Endothelial cell of umbilical vein (primary cell): ENCODE measurements at regions of chr11 and their contacts with region 1.

Region 1: DNA sequence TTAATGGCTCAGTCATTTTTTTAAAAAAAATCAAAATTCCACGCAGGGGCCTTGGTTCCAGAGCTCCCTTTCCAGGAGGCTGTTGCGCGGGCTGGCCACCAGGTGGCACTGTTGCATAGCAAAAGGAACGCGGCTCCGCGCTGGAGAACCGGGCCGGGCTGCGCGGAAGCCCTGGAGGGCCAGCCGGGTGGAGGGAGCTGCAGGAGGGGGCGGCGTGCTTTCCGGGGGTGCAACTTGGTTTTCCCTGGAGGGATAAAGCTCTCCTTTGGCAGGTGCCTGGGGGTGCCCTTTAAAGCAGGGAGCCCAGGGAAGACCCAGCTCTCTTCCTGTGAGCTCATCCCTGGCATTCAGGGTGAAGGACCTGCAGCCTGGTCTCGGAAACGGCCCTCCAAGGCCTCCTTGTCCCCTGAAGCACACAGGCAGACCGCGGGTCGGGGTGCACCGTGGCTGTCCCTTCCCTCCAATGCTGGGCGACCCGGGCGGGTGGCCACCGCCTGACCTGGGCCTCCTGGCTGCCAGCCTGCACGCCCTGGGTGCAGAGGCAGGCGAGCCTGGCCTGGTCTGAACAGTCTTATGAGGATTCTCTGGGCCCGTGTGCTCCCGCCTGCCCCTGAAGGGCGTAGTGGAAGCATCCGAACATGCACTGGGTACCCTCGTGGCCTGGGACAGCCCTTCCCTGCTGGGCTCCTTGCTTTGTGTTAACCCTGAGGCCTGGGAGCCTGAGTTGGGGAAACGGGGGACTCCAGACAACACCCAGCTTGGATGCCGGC is 23.4 kb downstream of the KRTAP5-5 start:
- DNase-seq: peak; percentile 44
- H3K4me3 ChIP-seq: no peak overlapping the region
- H3K27ac ChIP-seq: no peak overlapping the region
- H3K4me1 ChIP-seq: peaks cover 2% of the 10 kb centered on the region
- H3K27me3 ChIP-seq: peaks cover 0 to 4% of the 10 kb centered on the region in 2 experiments
- CTCF ChIP-seq: peak; percentile 93
- POLR2A ChIP-seq: no peak

Region 2: DNA sequence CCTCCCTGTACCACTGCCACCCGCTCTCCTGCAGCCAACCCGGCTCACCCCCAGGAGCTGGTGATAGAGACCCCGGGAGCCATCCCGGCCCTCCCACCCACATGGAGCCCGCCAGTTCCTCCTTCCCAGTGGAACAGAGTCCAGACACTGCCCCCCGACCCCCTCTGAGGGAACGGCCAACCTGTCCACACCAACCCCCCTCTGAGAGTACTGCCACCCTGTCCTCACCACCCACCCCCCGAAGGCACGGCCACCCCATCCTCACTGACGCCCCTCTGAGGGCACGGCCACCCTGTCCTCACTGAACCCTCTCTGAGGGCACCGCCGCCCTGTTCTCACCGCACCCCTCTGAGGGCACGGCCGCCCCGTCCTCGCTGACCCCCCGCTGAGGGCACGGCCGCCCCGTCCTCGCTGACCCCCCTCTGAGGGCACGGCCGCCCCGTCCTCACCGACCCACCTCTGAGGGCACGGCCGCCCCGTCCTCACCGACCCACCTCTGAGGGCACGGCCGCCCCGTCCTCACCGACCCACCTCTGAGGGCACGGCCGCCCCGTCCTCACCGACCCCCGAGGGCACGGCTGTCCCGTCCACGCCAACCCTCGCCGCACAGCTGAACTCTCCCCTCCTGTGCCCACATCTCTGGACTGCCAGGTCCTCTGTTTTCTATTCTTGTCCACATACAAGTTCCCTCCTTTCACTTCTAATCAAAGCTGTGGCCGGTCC is 361.5 kb before region 1 on chr11:
- CTCF ChIA-PET with region 1: no interaction called
- POLR2A ChIA-PET with region 1: no interaction called
- dilution Hi-C with region 1: no loop called
- intact Hi-C with region 1: no loop called
- DNase-seq: no peak
- H3K4me3 ChIP-seq: no peak overlapping the region
- H3K27ac ChIP-seq: no peak overlapping the region
- H3K4me1 ChIP-seq: no peaks in the 10 kb centered on the region
- H3K27me3 ChIP-seq: no peaks in the 10 kb centered on the region
- CTCF ChIP-seq: no peak
- POLR2A ChIP-seq: no peak

Region 3: GRCh38 chr11:1458340-1459218 is 194.4 kb before region 1 on chr11:
- CTCF ChIA-PET with region 1: no interaction called
- POLR2A ChIA-PET with region 1: no interaction called
- dilution Hi-C with region 1: no loop called
- intact Hi-C with region 1: no loop called
- DNase-seq: no peak
- H3K4me3 ChIP-seq: no peak overlapping the region
- H3K27ac ChIP-seq: no peak overlapping the region
- H3K4me1 ChIP-seq: no peaks in the 10 kb centered on the region
- H3K27me3 ChIP-seq: no peaks in the 10 kb centered on the region
- CTCF ChIP-seq: peak; percentile 5 to 53
- POLR2A ChIP-seq: no peak

Region 4: GRCh38 chr11:1546536-1547400 is 106.2 kb before region 1 on chr11:
- CTCF ChIA-PET with region 1: interaction called, 13 read pairs
- POLR2A ChIA-PET with region 1: no interaction called
- dilution Hi-C with region 1: no loop called
- intact Hi-C with region 1: no loop called
- DNase-seq: peak; percentile 28
- H3K4me3 ChIP-seq: no peak overlapping the region
- H3K27ac ChIP-seq: no peak overlapping the region
- H3K4me1 ChIP-seq: peaks cover 2% of the 10 kb centered on the region
- H3K27me3 ChIP-seq: peaks cover 13 to 28% of the 10 kb centered on the region in 2 experiments
- CTCF ChIP-seq: peak; percentile 62 to 70
- POLR2A ChIP-seq: no peak

Region 5: GRCh38 chr11:1633864-1634263 is 19.1 kb before region 1 on chr11:
- CTCF ChIA-PET with region 1: interaction called, 74 read pairs
- POLR2A ChIA-PET with region 1: no interaction called
- dilution Hi-C with region 1: no loop called
- intact Hi-C with region 1: no loop called
- DNase-seq: no peak
- H3K4me3 ChIP-seq: no peak overlapping the region
- H3K27ac ChIP-seq: no peak overlapping the region
- H3K4me1 ChIP-seq: peaks cover 3% of the 10 kb centered on the region
- H3K27me3 ChIP-seq: peaks cover 3 to 7% of the 10 kb centered on the region in 2 experiments
- CTCF ChIP-seq: no peak
- POLR2A ChIP-seq: no peak

Region 6: DNA sequence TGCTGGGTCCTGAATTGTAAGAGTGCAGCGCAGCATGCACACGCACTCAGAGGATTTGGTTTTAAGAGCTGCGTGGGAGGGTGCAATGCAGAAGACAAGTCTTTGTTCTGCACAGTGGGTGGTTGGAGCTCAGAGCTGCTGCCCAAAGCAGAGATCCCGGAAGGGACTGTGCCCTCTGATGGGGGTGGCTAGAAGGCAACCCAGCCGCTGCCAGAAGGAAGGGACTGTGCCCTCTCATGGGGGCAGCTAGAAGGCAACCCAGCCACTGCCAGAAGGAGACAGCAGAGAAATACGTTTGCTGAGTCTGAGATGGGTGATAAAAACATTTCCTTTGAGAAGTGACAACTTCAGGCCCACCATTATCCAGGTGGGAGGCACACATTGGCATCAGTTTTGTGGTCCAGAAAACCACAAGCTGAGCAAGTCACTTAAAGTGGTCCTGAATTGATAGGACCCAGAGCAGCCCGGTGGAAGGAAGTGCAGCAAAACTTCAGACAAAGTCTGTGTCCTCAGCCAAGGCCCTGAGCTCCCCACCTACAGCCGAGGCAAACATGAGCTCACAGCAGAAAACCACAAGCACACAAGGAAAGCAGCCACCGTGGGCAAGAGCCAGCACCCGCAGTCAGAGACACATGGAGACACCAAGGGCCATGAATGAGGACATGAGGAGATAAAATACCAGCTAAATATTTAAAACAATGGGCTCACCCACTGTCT is 48.3 kb after region 1 on chr11:
- CTCF ChIA-PET with region 1: interaction called, 21 read pairs
- POLR2A ChIA-PET with region 1: no interaction called
- dilution Hi-C with region 1: no loop called
- intact Hi-C with region 1: no loop called
- DNase-seq: no peak
- H3K4me3 ChIP-seq: no peak overlapping the region
- H3K27ac ChIP-seq: no peak overlapping the region
- H3K4me1 ChIP-seq: peaks cover 8% of the 10 kb centered on the region
- H3K27me3 ChIP-seq: no peaks in the 10 kb centered on the region
- CTCF ChIP-seq: no peak
- POLR2A ChIP-seq: no peak

Region 7: GRCh38 chr11:1837171-1838076 is 184.5 kb after region 1 on chr11:
- CTCF ChIA-PET with region 1: interaction called, 337 read pairs
- POLR2A ChIA-PET with region 1: no interaction called
- dilution Hi-C with region 1: no loop called
- intact Hi-C with region 1: loop called (anchors 1 kb)
- DNase-seq: peak; percentile 19
- H3K4me3 ChIP-seq: no peak overlapping the region
- H3K27ac ChIP-seq: no peak overlapping the region
- H3K4me1 ChIP-seq: no peaks in the 10 kb centered on the region
- H3K27me3 ChIP-seq: no peaks in the 10 kb centered on the region
- CTCF ChIP-seq: peak; percentile 67 to 92
- POLR2A ChIP-seq: no peak

Region 8: GRCh38 chr11:1943977-1944376 is 291.0 kb after region 1 on chr11:
- CTCF ChIA-PET with region 1: interaction called, 17 read pairs
- POLR2A ChIA-PET with region 1: no interaction called
- dilution Hi-C with region 1: no loop called
- intact Hi-C with region 1: no loop called
- DNase-seq: peak; percentile 24
- H3K4me3 ChIP-seq: no peak overlapping the region
- H3K27ac ChIP-seq: no peak overlapping the region
- H3K4me1 ChIP-seq: no peaks in the 10 kb centered on the region
- H3K27me3 ChIP-seq: no peaks in the 10 kb centered on the region
- CTCF ChIP-seq: no peak
- POLR2A ChIP-seq: no peak